ENCODE measurements at regions of chr1 and their contacts with region 1.

Region 1: GRCh38 chr1:18883636-18884418 is 18.5 kb downstream of the ALDH4A1 start:
- DNase-seq: peak; percentile 83 to 93
- ATAC-seq: peak; percentile 78
- H3K4me3 ChIP-seq: no peak overlapping the region
- H3K27ac ChIP-seq: no peak overlapping the region
- H3K4me1 ChIP-seq: no peaks in the 10 kb centered on the region
- H3K27me3 ChIP-seq: no peaks in the 10 kb centered on the region

Region 2: DNA sequence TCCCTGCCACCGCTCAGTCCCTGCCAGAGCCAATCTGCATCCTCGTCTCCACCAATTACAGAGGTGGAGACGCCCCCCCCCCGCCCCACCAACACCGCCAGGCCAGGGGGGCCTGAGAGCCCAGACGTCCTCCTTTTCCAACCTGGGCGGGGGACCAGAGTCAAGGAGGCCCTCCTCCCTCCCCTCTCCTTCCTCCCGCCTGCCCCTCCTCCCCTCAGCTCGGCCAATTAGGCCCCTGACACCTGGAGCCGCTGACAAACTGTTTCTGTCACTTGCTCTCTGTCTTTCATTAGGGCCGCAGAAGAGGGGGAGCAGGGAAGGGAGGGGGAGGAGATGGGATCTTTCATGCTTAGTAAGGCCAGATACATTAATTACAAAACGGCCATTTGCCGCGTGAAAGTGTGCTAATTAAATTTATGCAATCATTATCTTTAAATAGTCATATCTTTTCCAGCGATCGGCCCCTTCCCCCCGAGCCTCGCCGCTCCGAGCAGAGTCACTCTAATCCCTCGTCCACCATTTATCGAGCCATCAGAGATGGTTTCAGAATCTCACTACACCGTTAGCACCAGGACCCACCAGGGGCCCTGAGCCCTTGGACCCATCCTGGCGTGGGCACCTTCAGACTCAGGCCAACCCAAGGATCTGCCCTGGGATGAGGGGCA is 158.5 kb before region 1 on chr1:
- intact Hi-C with region 1: no loop called
- DNase-seq: no peak
- ATAC-seq: no peak
- H3K4me3 ChIP-seq: no peak overlapping the region
- H3K27ac ChIP-seq: no peak overlapping the region
- H3K4me1 ChIP-seq: no peaks in the 10 kb centered on the region
- H3K27me3 ChIP-seq: no peaks in the 10 kb centered on the region

Region 3: GRCh38 chr1:18751425-18751824 is 132.4 kb before region 1 on chr1:
- intact Hi-C with region 1: no loop called
- DNase-seq: peak in 1 of 2 donors; percentile 46
- ATAC-seq: no peak
- H3K4me3 ChIP-seq: no peak overlapping the region
- H3K27ac ChIP-seq: no peak overlapping the region
- H3K4me1 ChIP-seq: no peaks in the 10 kb centered on the region
- H3K27me3 ChIP-seq: no peaks in the 10 kb centered on the region

Region 4: DNA sequence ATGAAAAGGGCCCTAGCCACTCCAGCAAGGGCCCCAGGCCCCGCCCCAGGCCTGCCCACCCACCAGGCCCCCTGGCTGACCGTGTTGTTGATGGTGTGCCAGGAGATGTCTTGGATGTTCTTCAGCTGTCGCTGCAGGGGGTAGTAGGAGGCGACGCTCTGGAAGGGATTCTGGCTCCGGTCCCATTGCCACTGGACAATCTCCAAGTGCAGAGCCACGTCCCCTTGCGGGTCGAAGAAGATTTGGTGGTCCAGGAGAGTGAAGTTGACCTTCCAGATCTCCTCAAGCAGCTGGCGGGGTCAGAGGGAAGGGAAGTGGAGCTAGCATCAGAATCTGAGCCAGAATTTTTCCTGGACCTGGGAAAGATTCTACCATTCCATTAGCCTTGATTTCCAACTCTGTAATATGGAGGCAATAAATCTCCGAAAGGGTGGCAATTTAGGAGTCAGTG is 34.5 kb before region 1 on chr1:
- intact Hi-C with region 1: no loop called
- DNase-seq: peak in 1 of 2 donors; percentile 47
- ATAC-seq: no peak
- H3K4me3 ChIP-seq: no peak overlapping the region
- H3K27ac ChIP-seq: no peak overlapping the region
- H3K4me1 ChIP-seq: no peaks in the 10 kb centered on the region
- H3K27me3 ChIP-seq: no peaks in the 10 kb centered on the region

Region 5: GRCh38 chr1:19074902-19075721 is 191.3 kb after region 1 on chr1:
- intact Hi-C with region 1: loop called in 1 of 2 experiments (anchors 5 kb)
- DNase-seq: peak; percentile 66 to 80
- ATAC-seq: peak; percentile 37
- H3K4me3 ChIP-seq: no peak overlapping the region
- H3K27ac ChIP-seq: no peak overlapping the region
- H3K4me1 ChIP-seq: no peaks in the 10 kb centered on the region
- H3K27me3 ChIP-seq: no peaks in the 10 kb centered on the region

Region 6: DNA sequence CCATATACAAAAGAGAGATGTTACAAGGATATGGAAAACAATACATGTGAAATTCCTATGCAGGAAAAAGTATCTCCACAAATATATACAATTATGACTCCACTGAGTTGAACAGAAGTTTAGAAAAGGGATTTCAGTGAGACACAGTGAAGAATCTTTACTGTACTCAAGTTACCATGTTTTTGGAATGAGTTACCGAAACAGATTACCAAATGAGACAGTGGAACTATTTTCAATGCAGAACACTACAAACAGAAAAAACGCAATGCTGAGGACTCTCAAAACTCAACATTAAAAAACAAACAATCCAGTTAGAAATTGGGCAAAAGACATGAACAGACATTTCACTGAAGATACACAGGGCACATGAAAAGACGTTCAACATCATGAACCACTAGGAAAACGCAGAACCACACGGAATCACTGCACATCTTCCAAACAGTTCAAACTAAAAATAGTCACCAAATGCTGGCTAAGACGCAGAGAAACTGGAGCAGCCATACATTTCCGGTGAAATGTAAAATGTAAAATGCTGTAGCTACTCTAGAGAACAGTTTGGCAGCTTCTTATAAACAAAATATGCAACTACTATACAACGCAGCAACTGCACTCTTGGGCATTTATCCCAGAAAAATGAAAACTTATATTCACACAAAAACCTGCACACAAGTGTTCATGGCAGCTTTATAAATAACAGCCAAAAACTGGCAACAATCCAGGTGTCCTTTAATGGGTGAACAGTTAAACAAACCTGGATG is 207.5 kb after region 1 on chr1:
- intact Hi-C with region 1: loop called in 1 of 2 experiments (anchors 5 kb)
- DNase-seq: no peak
- ATAC-seq: no peak
- H3K4me3 ChIP-seq: no peak overlapping the region
- H3K27ac ChIP-seq: no peak overlapping the region
- H3K4me1 ChIP-seq: no peaks in the 10 kb centered on the region
- H3K27me3 ChIP-seq: no peaks in the 10 kb centered on the region

Measured in aorta (tissue), 5 donors.